ENCODE measurements at regions of chr22 and their contacts with region 1.

Region 1: DNA sequence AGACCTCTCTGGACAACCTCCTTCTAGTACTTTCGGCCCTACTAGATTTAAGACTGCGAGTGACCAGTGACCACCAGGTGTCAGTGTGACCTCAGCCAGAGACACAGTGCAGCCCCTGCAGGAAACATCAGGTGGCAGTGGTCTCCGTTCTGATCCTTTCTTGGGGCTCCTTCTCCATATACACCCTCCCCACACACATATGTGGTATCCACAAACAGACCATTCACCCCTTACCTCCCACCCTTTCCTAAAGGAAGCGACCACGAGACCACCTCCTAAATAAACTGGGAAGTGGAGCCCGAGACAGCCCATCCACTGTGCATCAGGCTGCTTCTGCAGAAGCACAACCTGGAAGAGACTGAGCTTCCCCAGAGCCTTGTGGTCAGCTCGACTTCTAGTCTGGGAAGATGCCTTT is 38.5 kb upstream of the CYP2D6 start:
- DNase-seq: peak; percentile 79
- ATAC-seq: peak; percentile 67
- H3K4me3 ChIP-seq: no peak overlapping the region
- H3K4me3 Mint-ChIP-seq: no peak overlapping the region
- H3K27ac ChIP-seq: no peak overlapping the region
- H3K27ac Mint-ChIP-seq: peak overlapping the region; percentile 61
- H3K4me1 ChIP-seq: peaks cover 12 to 31% of the 10 kb centered on the region in 2 donors
- H3K4me1 Mint-ChIP-seq: peaks cover 29% of the 10 kb centered on the region
- H3K27me3 ChIP-seq: no peaks in the 10 kb centered on the region
- H3K27me3 Mint-ChIP-seq: no peaks in the 10 kb centered on the region
- CTCF ChIP-seq: peak; percentile 83

Region 2: GRCh38 chr22:41976961-41977566 is 192.0 kb before region 1 on chr22:
- CTCF ChIA-PET with region 1: no interaction called
- POLR2A ChIA-PET with region 1: interaction called, 12 read pairs
- intact Hi-C with region 1: no loop called
- DNase-seq: peak; percentile 48
- ATAC-seq: peak; percentile 21
- H3K4me3 ChIP-seq: peak overlapping the region in 3 of 5 experiments; percentile 55 to 61 (median 55)
- H3K4me3 Mint-ChIP-seq: peak overlapping the region; percentile 71
- H3K27ac ChIP-seq: no peak overlapping the region
- H3K27ac Mint-ChIP-seq: no peak overlapping the region
- H3K4me1 ChIP-seq: peaks cover 10 to 12% of the 10 kb centered on the region in 2 donors
- H3K4me1 Mint-ChIP-seq: peaks cover 16% of the 10 kb centered on the region
- H3K27me3 ChIP-seq: peaks cover 0 to 49% (median 26%) of the 10 kb centered on the region in 4 experiments
- H3K27me3 Mint-ChIP-seq: peaks cover 41% of the 10 kb centered on the region
- CTCF ChIP-seq: no peak

Region 3: DNA sequence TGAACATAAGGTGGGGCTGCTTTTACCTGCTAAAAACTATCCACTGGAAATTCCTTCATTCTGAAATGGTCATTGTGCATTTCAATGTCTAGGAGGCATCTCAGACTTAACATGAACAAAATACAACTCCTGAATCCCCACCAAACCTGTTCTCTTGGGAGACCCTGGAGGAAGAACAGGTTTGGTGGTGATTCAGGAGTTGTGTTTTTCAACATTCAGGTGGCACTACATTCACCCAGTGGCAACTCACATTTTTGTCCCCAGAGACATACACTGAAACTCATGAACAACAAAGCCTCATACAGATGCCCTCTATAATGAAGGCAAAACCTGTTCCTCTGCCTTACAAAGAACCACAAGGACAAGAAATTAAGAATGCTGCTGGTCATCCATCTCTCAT is 25.9 kb after region 1 on chr22:
- CTCF ChIA-PET with region 1: no interaction called
- POLR2A ChIA-PET with region 1: no interaction called
- intact Hi-C with region 1: no loop called
- DNase-seq: no peak
- ATAC-seq: no peak
- H3K4me3 ChIP-seq: no peak overlapping the region
- H3K4me3 Mint-ChIP-seq: no peak overlapping the region
- H3K27ac ChIP-seq: no peak overlapping the region
- H3K27ac Mint-ChIP-seq: no peak overlapping the region
- H3K4me1 ChIP-seq: no peaks in the 10 kb centered on the region
- H3K4me1 Mint-ChIP-seq: peaks cover 43% of the 10 kb centered on the region
- H3K27me3 ChIP-seq: no peaks in the 10 kb centered on the region
- H3K27me3 Mint-ChIP-seq: no peaks in the 10 kb centered on the region
- CTCF ChIP-seq: no peak

Region 4: DNA sequence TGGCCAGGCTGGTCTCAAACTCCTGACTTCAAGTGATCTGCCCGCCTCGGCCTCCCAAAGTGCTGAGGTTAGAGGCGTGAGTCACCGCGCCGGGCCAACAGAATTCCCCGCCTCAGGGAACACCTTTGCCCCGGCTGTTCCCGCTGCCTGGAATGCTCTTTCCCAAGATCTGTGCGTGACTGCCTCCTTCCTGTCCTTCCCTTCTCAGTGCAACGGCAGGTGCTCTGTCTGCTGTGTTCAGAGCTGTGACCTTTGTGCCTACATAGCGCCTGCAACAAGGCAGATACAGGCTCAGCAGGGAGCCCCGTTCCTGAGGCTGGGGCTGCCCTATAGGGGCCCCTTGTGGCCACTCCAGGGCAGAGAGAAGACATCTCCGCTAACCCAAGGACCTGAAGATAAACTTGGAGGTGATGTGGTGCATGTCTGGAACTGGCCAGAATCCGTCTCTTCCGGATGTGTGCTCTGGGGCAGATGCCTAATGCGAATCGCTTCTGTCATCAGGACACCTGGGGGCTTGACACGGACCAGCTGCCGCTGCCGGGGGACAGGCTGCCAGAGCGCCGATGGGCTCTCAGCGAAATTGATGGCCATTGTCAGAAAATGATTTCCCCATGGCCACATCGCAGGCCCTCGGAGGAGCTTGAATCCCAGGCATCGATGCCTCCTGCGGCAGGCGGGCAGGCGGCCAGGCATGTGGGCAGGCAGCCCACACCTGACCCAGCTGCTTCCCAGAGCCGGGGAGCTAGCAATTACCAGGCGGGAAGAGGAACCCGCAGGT is 144.9 kb after region 1 on chr22:
- CTCF ChIA-PET with region 1: interaction called, 7 read pairs
- POLR2A ChIA-PET with region 1: no interaction called
- intact Hi-C with region 1: loop called (anchors 1 kb)
- DNase-seq: peak; percentile 69
- ATAC-seq: peak; percentile 70
- H3K4me3 ChIP-seq: no peak overlapping the region
- H3K4me3 Mint-ChIP-seq: no peak overlapping the region
- H3K27ac ChIP-seq: no peak overlapping the region
- H3K27ac Mint-ChIP-seq: no peak overlapping the region
- H3K4me1 ChIP-seq: peaks cover 0 to 12% of the 10 kb centered on the region in 2 donors
- H3K4me1 Mint-ChIP-seq: peaks cover 12% of the 10 kb centered on the region
- H3K27me3 ChIP-seq: peaks cover 0 to 16% (median 2%) of the 10 kb centered on the region in 4 experiments
- H3K27me3 Mint-ChIP-seq: peaks cover 32% of the 10 kb centered on the region
- CTCF ChIP-seq: peak; percentile 33

Region 5: GRCh38 chr22:42473484-42474193 is 304.6 kb after region 1 on chr22:
- CTCF ChIA-PET with region 1: interaction called, 13 read pairs
- POLR2A ChIA-PET with region 1: no interaction called
- intact Hi-C with region 1: loop called (anchors 1 kb)
- DNase-seq: peak; percentile 68
- ATAC-seq: peak; percentile 41
- H3K4me3 ChIP-seq: no peak overlapping the region
- H3K4me3 Mint-ChIP-seq: no peak overlapping the region
- H3K27ac ChIP-seq: no peak overlapping the region
- H3K27ac Mint-ChIP-seq: no peak overlapping the region
- H3K4me1 ChIP-seq: peaks cover 0 to 3% of the 10 kb centered on the region in 2 donors
- H3K4me1 Mint-ChIP-seq: peaks cover 4% of the 10 kb centered on the region
- H3K27me3 ChIP-seq: peaks cover 0 to 1% (median 0%) of the 10 kb centered on the region in 4 experiments
- H3K27me3 Mint-ChIP-seq: peaks cover 11% of the 10 kb centered on the region
- CTCF ChIP-seq: peak; percentile 78